ENCODE measurements at regions of chr15 and their contacts with region 1.

Region 1: GRCh38 chr15:62306851-62307504 is 141.9 kb upstream of the C2CD4B start:
- DNase-seq: peak; percentile 70
- H3K4me3 ChIP-seq: no peak overlapping the region
- H3K27ac ChIP-seq: no peak overlapping the region
- H3K4me1 ChIP-seq: peaks cover 3% of the 10 kb centered on the region
- H3K27me3 ChIP-seq: peaks cover 4 to 6% of the 10 kb centered on the region in 2 experiments
- CTCF ChIP-seq: peak; percentile 57 to 61
- POLR2A ChIP-seq: no peak

Region 2: GRCh38 chr15:61871926-61872522 is 435.0 kb before region 1 on chr15:
- CTCF ChIA-PET with region 1: interaction called, 42 read pairs
- POLR2A ChIA-PET with region 1: no interaction called
- dilution Hi-C with region 1: no loop called
- intact Hi-C with region 1: loop called (anchors 1 kb)
- DNase-seq: peak; percentile 49
- H3K4me3 ChIP-seq: no peak overlapping the region
- H3K27ac ChIP-seq: no peak overlapping the region
- H3K4me1 ChIP-seq: no peaks in the 10 kb centered on the region
- H3K27me3 ChIP-seq: no peaks in the 10 kb centered on the region
- CTCF ChIP-seq: peak in 1 of 2 donors; percentile 31
- POLR2A ChIP-seq: no peak

Region 3: GRCh38 chr15:62060113-62060895 is 246.7 kb before region 1 on chr15 and contains the start of gene VPS13C:
- CTCF ChIA-PET with region 1: interaction called, 14 read pairs
- POLR2A ChIA-PET with region 1: no interaction called
- dilution Hi-C with region 1: no loop called
- intact Hi-C with region 1: no loop called
- DNase-seq: peak; percentile 98
- H3K4me3 ChIP-seq: peak within 1 kb of the TSS; percentile 90 to 99 (median 92)
- H3K27ac ChIP-seq: peak within 1 kb of the TSS; percentile 81
- H3K4me1 ChIP-seq: peaks cover 25% of the 10 kb centered on the region
- H3K27me3 ChIP-seq: no peaks in the 10 kb centered on the region
- CTCF ChIP-seq: peak; percentile 85 to 91
- POLR2A ChIP-seq: peak; percentile 80
- total RNA-seq, gene VPS13C: 57.5 and 60.3 TPM in 2 replicates

Region 4: DNA sequence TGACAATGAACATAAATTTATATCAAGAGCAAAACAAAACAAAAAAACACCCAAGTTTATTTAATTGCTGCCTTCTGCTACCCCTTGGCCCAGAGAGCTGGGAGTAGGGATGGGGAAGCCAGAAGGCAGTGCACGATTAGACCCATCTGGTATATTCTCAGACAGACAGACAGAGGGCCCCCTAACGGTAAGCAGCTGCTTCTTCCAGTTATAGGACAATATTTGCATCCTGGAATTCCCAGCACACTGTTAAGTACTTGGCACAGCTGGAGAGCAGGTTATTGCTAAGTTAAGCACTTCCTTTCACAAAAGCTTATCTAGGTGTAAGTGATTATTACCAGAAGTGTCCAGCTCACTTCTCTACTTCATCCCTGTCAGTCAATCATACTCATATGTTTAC is 181.2 kb before region 1 on chr15:
- CTCF ChIA-PET with region 1: interaction called, 32 read pairs
- POLR2A ChIA-PET with region 1: no interaction called
- dilution Hi-C with region 1: no loop called
- intact Hi-C with region 1: loop called (anchors 1 kb)
- DNase-seq: peak; percentile 91
- H3K4me3 ChIP-seq: no peak overlapping the region
- H3K27ac ChIP-seq: peak overlapping the region; percentile 99
- H3K4me1 ChIP-seq: peaks cover 35% of the 10 kb centered on the region
- H3K27me3 ChIP-seq: no peaks in the 10 kb centered on the region
- CTCF ChIP-seq: peak; percentile 56 to 66
- POLR2A ChIP-seq: no peak

Region 5: DNA sequence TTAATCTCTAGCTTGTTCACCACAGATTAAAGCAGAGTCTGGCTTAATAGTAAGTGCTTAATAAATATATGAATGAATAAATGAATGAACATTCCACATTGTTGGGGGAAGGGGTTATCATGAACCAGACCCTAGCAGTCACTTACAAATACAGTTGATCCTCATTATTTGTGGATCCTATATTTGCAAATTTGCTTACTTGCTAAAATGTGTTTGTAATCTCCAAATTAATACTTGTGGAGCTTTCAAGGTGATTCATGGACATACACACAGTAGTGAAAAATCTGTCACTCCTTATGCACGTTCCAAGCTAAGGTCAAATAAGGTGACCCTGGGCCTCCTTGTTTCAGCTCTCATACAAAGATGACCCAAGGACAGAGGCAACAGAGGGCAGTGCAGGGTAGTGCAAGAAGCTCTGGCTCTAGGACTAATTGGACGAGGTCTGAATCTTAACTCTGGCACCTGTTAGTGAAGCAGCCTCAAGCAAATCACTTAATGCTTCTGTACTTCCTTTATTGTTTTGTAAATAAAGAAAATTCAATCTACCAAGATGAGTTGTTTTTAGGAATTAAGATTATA is 29.1 kb before region 1 on chr15:
- CTCF ChIA-PET with region 1: interaction called, 15 read pairs
- POLR2A ChIA-PET with region 1: no interaction called
- dilution Hi-C with region 1: no loop called
- intact Hi-C with region 1: no loop called
- DNase-seq: no peak
- H3K4me3 ChIP-seq: no peak overlapping the region
- H3K27ac ChIP-seq: no peak overlapping the region
- H3K4me1 ChIP-seq: no peaks in the 10 kb centered on the region
- H3K27me3 ChIP-seq: peaks cover 0 to 5% of the 10 kb centered on the region in 2 experiments
- CTCF ChIP-seq: no peak
- POLR2A ChIP-seq: no peak

Region 6: GRCh38 chr15:62344806-62345539 is 38.0 kb after region 1 on chr15:
- CTCF ChIA-PET with region 1: no interaction called
- POLR2A ChIA-PET with region 1: no interaction called
- dilution Hi-C with region 1: no loop called
- intact Hi-C with region 1: loop called (anchors 2 kb)
- DNase-seq: peak; percentile 68
- H3K4me3 ChIP-seq: no peak overlapping the region
- H3K27ac ChIP-seq: no peak overlapping the region
- H3K4me1 ChIP-seq: no peaks in the 10 kb centered on the region
- H3K27me3 ChIP-seq: peaks cover 0 to 2% of the 10 kb centered on the region in 2 experiments
- CTCF ChIP-seq: peak; percentile 57 to 77
- POLR2A ChIP-seq: no peak

Region 7: GRCh38 chr15:62492900-62493299 is 185.9 kb after region 1 on chr15:
- CTCF ChIA-PET with region 1: no interaction called
- POLR2A ChIA-PET with region 1: no interaction called
- dilution Hi-C with region 1: no loop called
- intact Hi-C with region 1: no loop called
- DNase-seq: no peak
- H3K4me3 ChIP-seq: no peak overlapping the region
- H3K27ac ChIP-seq: no peak overlapping the region
- H3K4me1 ChIP-seq: no peaks in the 10 kb centered on the region
- H3K27me3 ChIP-seq: no peaks in the 10 kb centered on the region
- CTCF ChIP-seq: no peak
- POLR2A ChIP-seq: no peak

Measured in endothelial cell of umbilical vein (primary cell).